HEK293 (cell line): ENCODE measurements at regions of chr16 and their contacts with region 1.

Region 1: DNA sequence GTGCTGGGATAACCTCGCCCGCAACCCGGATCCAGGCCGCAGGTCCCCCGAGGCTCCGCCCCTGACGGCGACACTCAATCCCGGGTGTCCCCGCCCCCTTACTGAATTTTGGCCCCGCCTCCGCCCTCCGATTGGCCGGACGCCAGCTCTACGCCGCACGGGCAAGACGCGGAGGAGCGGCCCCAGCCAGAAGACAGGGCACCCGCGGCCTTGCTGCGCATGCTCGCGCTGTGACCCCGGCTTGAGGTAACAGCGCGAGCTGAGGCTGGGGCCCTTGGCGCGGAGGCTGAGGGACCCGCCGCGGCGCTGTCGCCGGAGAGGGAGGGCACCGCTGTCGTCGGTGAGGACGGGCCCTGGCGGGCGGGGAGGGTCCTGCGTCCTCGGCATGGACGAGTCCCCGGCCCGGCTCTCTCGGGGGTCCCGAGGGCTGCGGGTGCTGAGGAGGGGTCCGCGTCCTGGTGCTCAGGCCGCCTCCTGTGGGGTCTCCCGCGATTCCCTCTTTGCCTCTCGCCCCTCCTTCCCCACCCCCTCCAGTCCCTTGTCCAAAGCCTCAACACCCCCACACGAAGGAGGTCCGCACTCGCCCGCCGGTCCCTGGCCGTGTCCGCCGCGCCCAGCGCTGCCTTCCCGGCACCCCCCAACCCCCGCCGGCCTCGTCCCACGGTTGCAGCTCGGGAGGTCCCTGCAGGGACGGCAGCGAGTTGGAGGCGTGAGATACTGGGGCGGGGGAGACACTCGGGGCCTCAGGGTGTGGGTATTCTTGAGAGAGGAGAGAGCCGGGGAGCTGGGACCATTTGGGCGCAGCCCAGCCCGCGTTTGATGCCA is at the start of gene FLYWCH2:
- H3K4me3 ChIP-seq: peak within 1 kb of the TSS; percentile 95
- H3K27ac ChIP-seq: peak within 1 kb of the TSS; percentile 77; the same call in 1 of the 2 replicates
- H3K4me1 ChIP-seq: no peaks in the 10 kb centered on the region
- CTCF ChIP-seq: peak; percentile 94

Region 2: GRCh38 chr16:2799866-2800239 is 83.4 kb before region 1 on chr16:
- CTCF ChIA-PET with region 1: no interaction called
- POLR2A ChIA-PET with region 1: no interaction called
- H3K4me3 ChIP-seq: no peak overlapping the region
- H3K27ac ChIP-seq: no peak overlapping the region
- H3K4me1 ChIP-seq: peaks cover 8% of the 10 kb centered on the region
- CTCF ChIP-seq: no peak

Region 3: DNA sequence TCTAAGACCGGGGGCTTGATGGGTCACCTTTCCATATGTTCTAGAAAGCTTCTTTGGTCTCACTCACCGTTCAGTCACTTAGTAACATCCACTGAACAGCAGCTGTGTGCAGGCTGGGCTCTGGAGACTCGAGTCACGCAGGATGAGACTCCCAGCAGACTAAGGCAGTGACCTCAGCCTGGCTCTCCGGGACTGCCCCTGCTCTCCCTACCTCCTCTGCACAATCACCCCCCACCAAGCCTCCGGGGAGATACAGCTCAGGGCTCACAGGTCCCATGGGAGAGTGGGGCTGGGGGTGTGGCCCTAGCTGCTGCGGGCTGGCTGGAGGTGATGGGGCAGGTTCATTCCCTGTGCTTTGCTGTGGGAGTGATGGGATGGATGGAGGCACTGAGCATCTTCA is 13.9 kb after region 1 on chr16:
- CTCF ChIA-PET with region 1: interaction called, 9 read pairs
- POLR2A ChIA-PET with region 1: interaction called, 12 read pairs
- H3K4me3 ChIP-seq: no peak overlapping the region
- H3K27ac ChIP-seq: no peak overlapping the region
- H3K4me1 ChIP-seq: no peaks in the 10 kb centered on the region
- CTCF ChIP-seq: no peak

Region 4: DNA sequence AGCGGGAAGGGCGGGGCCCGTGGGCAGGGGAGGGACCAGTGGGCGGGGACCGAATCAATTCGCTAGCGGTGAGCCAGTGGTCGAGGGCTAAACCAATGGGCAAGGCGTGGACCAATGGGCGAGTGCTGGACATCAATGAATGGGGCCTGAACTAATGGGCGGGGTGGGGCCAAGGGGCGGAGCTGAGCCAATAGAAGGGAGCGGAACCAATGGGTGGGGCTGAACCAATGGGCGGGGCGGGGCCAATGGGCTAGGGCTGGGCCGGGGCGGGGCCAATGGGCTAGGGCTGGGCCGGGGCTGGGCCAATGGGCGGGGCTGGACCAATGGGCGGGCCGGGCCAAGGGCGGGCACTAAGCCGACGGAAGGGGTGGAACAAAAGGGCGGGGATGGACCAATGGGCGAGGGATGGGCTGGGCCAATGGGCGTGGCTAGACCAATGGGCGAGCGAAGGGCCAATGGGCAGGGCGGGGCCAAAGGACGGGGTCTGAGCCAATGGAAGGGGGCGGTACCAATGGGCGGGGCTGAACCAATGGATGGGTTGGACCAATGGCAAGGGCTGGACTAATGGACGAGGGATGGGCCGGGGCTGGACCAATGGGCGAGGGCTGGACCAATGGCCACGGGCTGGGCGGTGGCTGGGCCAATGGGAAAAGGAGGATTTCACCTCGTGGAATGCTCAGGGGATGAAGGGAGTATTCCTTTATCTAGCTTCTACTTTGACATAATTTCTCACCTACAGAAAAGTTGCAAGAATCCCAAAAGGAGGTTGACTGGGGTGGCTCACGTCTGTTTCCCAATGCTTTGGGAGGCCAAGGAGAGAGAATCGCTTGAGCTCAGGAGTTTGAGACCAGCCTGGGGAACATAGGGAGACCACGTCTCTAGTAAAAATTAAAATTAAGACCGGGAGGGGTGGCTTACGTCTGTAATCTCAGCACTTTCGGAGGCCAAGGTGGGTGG is 22.5 kb after region 1 on chr16:
- CTCF ChIA-PET with region 1: interaction called, 9 read pairs
- POLR2A ChIA-PET with region 1: interaction called, 40 read pairs
- H3K4me3 ChIP-seq: peak overlapping the region; percentile 66
- H3K27ac ChIP-seq: no peak overlapping the region
- H3K4me1 ChIP-seq: peaks cover 3% of the 10 kb centered on the region; the same call in 1 of the 2 replicates
- CTCF ChIP-seq: no peak

Region 5: GRCh38 chr16:2911580-2912329 is 28.5 kb after region 1 on chr16 and contains the start of gene FLYWCH1:
- CTCF ChIA-PET with region 1: interaction called, 6 read pairs
- POLR2A ChIA-PET with region 1: interaction called, 15 read pairs
- H3K4me3 ChIP-seq: peak within 1 kb of the TSS; percentile 58
- H3K27ac ChIP-seq: peak within 1 kb of the TSS; percentile 54; the same call in 1 of the 2 replicates
- H3K4me1 ChIP-seq: 0 out of 2 replicates have a peak, but pooled peaks cover 4% of the 10 kb centered on the region
- CTCF ChIP-seq: peak; percentile 47

Region 6: GRCh38 chr16:3065069-3065741 is 182.0 kb after region 1 on chr16 and contains the start of gene IL32:
- CTCF ChIA-PET with region 1: no interaction called
- POLR2A ChIA-PET with region 1: no interaction called
- H3K4me3 ChIP-seq: no peak within 1 kb of the TSS
- H3K27ac ChIP-seq: no peak within 1 kb of the TSS
- H3K4me1 ChIP-seq: no peaks in the 10 kb centered on the region
- CTCF ChIP-seq: no peak